Heart left ventricle (tissue), 16 donors: ENCODE measurements at regions of chr12 and their contacts with region 1.

Region 1: DNA sequence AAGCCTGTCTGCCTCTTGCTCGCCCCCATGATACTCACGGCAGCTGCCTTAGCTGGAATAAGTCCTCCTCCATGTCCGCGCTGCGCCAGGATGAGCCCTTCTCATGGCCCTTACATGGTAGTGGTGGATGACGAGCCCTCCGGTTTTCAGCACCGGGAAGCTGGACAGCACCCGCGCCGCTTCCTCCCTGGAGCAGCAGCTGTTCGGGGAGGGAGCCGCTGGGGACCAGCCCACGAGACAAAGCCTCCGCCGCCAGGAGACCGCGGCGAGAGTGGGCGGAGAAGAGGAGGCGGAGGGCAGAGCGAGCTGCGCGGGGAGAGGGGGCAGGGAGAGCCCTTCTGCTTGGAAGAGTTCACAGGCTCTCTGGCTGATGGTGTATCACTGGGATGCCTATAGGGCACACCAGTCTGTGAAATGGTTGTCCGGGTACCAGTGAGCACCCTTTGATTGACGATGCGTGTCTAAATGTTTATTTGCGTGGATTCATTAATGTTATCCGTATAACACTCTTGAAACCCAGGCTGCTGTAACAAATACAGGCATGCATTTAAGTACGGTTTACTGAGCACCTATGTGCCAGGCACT is at the start of gene SVOP:
- DNase-seq: peak; percentile 83 to 90 (median 89)
- ATAC-seq: peak; percentile 89 to 98 (median 97)
- H3K4me3 ChIP-seq: peak within 1 kb of the TSS in 1 of 12 donors; percentile 4
- H3K27ac ChIP-seq: no peak within 1 kb of the TSS
- H3K4me1 ChIP-seq: peaks cover 0 to 7% (median 0%) of the 10 kb centered on the region in 12 donors
- H3K27me3 ChIP-seq: peaks cover 0 to 15% (median 0%) of the 10 kb centered on the region in 9 donors
- CTCF ChIP-seq: no peak
- POLR2A ChIP-seq: no peak
- total RNA-seq, gene SVOP: 0.25 to 5.3 (median 2.2) TPM

Region 2: GRCh38 chr12:108967869-108968540 is 52.9 kb before region 1 on chr12:
- intact Hi-C with region 1: loop called in 1 of 10 experiments (anchors 5 kb)
- DNase-seq: peak in 1 of 5 donors; percentile 30
- ATAC-seq: peak in 3 of 4 donors; percentile 30 to 51 (median 47)
- H3K4me3 ChIP-seq: no peak overlapping the region
- H3K27ac ChIP-seq: peak overlapping the region in 6 of 12 donors; percentile 62 to 79 (median 77)
- H3K4me1 ChIP-seq: peaks cover 0 to 13% (median 0%) of the 10 kb centered on the region in 12 donors
- H3K27me3 ChIP-seq: no peaks in the 10 kb centered on the region
- CTCF ChIP-seq: peak in 10 of 12 donors; percentile 4 to 51 (median 28)
- POLR2A ChIP-seq: no peak

Region 3: DNA sequence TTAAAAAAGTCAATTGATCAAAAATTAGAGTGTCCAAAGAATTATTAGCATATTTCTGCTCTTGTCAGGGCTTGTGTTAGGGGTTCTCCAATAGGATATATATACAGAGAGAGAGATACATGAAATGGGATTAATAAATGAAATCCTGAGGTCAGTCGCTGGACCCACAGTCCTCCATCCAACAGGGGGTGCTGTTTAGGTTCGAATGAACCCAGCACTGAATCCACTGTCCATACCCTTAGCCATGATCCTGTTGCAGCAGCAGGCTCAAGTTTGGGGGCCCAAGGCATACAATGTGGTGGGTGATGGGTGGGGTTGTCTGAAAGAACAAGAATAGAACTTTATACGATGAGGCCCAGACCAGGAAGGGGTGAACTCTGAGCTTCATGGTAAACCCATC is 326.0 kb after region 1 on chr12:
- intact Hi-C with region 1: no loop called
- DNase-seq: no peak
- ATAC-seq: no peak
- H3K4me3 ChIP-seq: no peak overlapping the region
- H3K27ac ChIP-seq: no peak overlapping the region
- H3K4me1 ChIP-seq: no peaks in the 10 kb centered on the region
- H3K27me3 ChIP-seq: peaks cover 0 to 4% (median 0%) of the 10 kb centered on the region in 9 donors
- CTCF ChIP-seq: no peak
- POLR2A ChIP-seq: no peak